Esophagus muscularis mucosa (tissue), 4 donors: ENCODE measurements at regions of chr12 and their contacts with region 1.

Region 1: GRCh38 chr12:95998611-95999286 is 2.6 kb upstream of the HAL start:
- DNase-seq: no peak
- H3K4me3 ChIP-seq: no peak overlapping the region
- H3K27ac ChIP-seq: no peak overlapping the region
- H3K4me1 ChIP-seq: peaks cover 0 to 12% (median 2%) of the 10 kb centered on the region in 4 donors
- H3K27me3 ChIP-seq: no peaks in the 10 kb centered on the region
- CTCF ChIP-seq: peak; percentile 63 to 75 (median 73)
- EP300 ChIP-seq: no peak
- POLR2A ChIP-seq: no peak

Region 2: GRCh38 chr12:95343461-95344230 is 655.1 kb before region 1 on chr12:
- intact Hi-C with region 1: no loop called
- DNase-seq: no peak
- H3K4me3 ChIP-seq: no peak overlapping the region
- H3K27ac ChIP-seq: no peak overlapping the region
- H3K4me1 ChIP-seq: peaks cover 0 to 7% (median 3%) of the 10 kb centered on the region in 4 donors
- H3K27me3 ChIP-seq: no peaks in the 10 kb centered on the region
- CTCF ChIP-seq: no peak
- EP300 ChIP-seq: no peak
- POLR2A ChIP-seq: no peak

Region 3: DNA sequence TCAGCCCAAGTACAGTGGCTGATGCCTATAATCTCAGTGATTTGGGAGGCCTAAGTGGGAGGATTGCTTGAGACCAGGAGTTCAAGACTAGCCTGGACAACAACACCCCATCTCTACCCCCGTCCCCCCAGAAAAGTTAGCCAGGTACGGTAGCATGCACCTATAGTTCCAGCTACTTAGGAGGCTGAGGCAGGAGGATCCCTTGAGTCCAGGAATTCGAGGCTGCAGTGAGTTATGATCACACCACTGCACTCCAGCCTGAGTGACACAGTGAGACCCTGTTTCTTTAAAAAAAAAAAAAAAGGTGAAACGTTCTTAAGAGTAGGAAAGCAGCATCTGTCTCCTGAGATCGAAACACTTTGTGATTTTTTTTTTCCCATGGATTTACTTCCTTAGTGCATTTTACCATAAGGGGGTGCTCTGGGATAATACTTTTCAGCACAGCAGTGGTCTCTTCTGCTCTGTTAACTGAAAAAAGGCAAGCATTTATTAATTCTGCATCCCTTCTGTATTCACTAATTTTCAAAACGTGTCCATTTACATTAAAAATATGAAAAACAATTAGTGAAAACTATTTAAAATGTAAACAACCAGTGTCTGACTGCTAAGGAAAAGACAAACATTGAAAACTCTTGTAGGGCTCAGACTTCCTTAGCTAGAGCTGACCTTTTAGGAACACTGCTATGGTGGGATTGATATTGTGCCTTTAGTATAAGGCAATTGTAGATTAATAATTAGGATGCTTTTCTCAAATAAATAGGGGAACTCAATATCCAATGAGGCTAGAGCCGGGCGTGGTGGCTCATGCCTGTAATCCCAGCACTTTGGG is 416.3 kb before region 1 on chr12:
- intact Hi-C with region 1: loop called (anchors 5 kb)
- DNase-seq: no peak
- H3K4me3 ChIP-seq: no peak overlapping the region
- H3K27ac ChIP-seq: no peak overlapping the region
- H3K4me1 ChIP-seq: peaks cover 0 to 17% (median 4%) of the 10 kb centered on the region in 4 donors
- H3K27me3 ChIP-seq: no peaks in the 10 kb centered on the region
- CTCF ChIP-seq: peak; percentile 51 to 61 (median 53)
- EP300 ChIP-seq: no peak
- POLR2A ChIP-seq: no peak

Region 4: DNA sequence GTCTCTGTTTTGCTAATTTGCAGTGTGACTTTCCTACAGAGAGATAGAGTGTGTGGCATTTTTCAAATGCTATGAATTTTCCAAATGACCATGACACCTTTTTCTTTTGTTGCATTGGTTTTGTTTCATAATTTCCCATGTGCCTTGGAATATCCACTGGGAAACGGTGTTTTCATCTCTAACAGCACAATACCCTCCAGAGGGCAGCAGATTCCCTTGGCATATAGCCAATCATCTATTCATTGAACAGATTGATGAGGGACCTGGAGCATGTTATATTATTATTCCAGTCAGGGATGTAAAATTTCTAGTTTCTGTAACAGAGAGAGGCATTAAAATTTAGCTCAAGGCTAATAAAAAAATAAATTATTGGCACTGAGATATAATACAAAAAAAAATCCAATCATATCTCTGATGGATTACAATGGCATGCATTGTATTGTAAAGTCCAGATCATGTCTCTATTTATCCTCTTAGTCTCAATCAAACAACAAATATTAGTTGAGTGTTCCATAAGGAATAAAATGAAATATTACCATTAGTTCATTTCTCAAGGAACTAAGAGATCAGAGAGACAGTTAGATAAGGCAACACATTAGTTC is 178.5 kb before region 1 on chr12:
- intact Hi-C with region 1: loop called (anchors 10 kb)
- DNase-seq: no peak
- H3K4me3 ChIP-seq: no peak overlapping the region
- H3K27ac ChIP-seq: no peak overlapping the region
- H3K4me1 ChIP-seq: peaks cover 0 to 4% (median 1%) of the 10 kb centered on the region in 4 donors
- H3K27me3 ChIP-seq: no peaks in the 10 kb centered on the region
- CTCF ChIP-seq: peak; percentile 40 to 54 (median 53)
- EP300 ChIP-seq: no peak
- POLR2A ChIP-seq: no peak

Region 5: DNA sequence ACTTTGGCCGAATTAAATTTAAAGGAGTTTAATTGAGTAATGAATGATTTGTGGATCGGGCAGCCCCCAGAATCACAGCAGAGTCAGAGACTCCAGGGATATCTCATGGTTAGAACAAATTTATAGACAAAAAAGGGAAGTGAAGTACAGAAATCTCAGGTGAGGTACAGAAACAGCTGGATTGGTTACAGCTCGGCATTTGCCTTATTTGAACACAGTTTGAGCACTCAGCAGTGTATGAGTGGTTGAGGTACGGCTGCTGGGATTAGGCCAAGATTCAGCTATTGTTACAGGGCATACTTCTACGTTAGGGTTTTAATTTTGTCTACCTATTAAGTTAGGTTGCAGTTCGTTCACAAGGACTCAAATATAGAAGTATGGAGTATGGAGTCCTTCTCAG is 79.6 kb before region 1 on chr12:
- intact Hi-C with region 1: loop called (anchors 1 kb)
- DNase-seq: no peak
- H3K4me3 ChIP-seq: no peak overlapping the region
- H3K27ac ChIP-seq: no peak overlapping the region
- H3K4me1 ChIP-seq: no peaks in the 10 kb centered on the region
- H3K27me3 ChIP-seq: peaks cover 0 to 7% (median 0%) of the 10 kb centered on the region in 4 donors
- CTCF ChIP-seq: no peak
- EP300 ChIP-seq: no peak
- POLR2A ChIP-seq: no peak

Region 6: DNA sequence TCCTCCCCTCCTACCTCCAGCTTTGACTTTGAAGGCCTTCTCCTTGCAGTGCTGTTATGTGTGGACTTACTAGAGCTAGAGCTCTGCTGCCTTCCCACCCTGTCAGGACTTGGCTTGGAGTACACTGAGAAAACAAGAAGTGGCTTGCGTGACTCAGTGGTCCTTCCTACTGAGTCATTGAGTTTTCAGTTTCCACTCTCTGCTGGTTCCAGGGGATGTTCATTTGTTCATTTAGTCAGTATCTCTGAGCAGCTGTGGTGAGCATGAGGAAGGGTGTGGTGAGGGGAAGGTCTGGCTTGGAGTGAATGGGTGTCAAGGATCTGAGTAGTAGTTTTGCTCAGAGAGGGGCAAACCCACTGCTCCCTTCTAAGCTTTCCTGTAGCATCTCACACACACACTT is 178.3 kb after region 1 on chr12:
- intact Hi-C with region 1: no loop called
- DNase-seq: no peak
- H3K4me3 ChIP-seq: no peak overlapping the region
- H3K27ac ChIP-seq: no peak overlapping the region
- H3K4me1 ChIP-seq: no peaks in the 10 kb centered on the region
- H3K27me3 ChIP-seq: no peaks in the 10 kb centered on the region
- CTCF ChIP-seq: no peak
- EP300 ChIP-seq: no peak
- POLR2A ChIP-seq: no peak